GM12878 (cell line): ENCODE measurements at regions of chr5 and their contacts with region 1.

Region 1: GRCh38 chr5:37738057-37738691 is 101.7 kb downstream of the GDNF start:
- DNase-seq: peak; percentile 62
- ATAC-seq: peak; percentile 89
- H3K4me3 ChIP-seq: no peak overlapping the region
- H3K27ac ChIP-seq: no peak overlapping the region
- H3K4me1 ChIP-seq: peaks cover 6% of the 10 kb centered on the region
- H3K27me3 ChIP-seq: no peaks in the 10 kb centered on the region
- CTCF ChIP-seq: no peak
- EP300 ChIP-seq: peak; percentile 43 to 73; a peak in 1 of 4 replicates
- POLR2A ChIP-seq: no peak
- RAD21 ChIP-seq: no peak

Region 2: DNA sequence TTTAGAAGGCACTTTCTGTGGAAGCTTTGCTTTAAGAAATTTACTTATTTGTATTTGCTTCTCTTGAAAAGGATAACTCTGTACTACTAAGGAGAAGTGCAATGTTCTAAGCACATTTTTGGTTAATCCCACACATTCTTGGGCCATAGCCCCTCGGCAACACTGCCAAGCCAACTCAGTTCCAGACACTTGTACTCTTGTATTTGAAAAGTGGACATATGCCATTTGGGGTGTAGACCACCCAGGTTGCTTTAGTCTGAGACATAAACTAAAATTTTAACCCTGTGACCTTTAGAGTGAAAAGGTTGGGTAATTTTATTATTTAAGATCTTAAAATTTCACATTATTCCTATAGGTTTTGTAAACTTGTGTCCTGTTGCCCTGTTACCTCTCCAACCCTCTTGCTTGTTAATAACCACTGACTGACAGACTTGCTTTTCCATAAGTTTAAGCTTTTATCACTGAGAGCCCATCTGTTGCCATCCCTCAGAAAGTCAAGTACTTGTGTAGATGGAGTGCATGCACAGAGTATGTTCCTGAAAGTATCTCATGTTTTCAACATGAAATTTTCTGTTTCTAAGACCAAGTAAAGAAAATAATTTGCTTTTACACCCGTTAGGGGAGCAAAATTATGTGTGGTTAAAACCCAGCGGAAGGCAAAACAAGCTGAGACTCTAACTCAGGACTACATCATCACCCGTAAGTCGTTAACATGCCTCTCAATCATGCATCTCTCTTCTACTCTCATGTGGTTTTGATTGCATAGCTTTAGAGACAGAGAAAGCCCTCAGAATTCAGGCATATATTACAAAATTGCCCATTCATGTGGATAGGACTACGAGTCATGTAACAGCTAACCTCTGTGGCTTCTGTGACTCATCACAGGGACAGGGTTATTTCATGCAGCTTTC is 15.7 kb before region 1 on chr5:
- CTCF ChIA-PET with region 1: interaction called, 26 read pairs
- POLR2A ChIA-PET with region 1: no interaction called
- RAD21 ChIA-PET with region 1: interaction called, 4 read pairs
- SMC1A ChIA-PET with region 1: interaction called, 18 read pairs
- in situ Hi-C with region 1: no loop called
- intact Hi-C with region 1: no loop called
- DNase-seq: peak; percentile 59
- ATAC-seq: peak; percentile 93
- H3K4me3 ChIP-seq: no peak overlapping the region
- H3K27ac ChIP-seq: no peak overlapping the region
- H3K4me1 ChIP-seq: peaks cover 10% of the 10 kb centered on the region
- H3K27me3 ChIP-seq: no peaks in the 10 kb centered on the region
- CTCF ChIP-seq: no peak
- EP300 ChIP-seq: peak in 1 of 2 experiments; percentile 46; a peak in 1 of 4 replicates
- POLR2A ChIP-seq: no peak
- RAD21 ChIP-seq: no peak

Region 3: DNA sequence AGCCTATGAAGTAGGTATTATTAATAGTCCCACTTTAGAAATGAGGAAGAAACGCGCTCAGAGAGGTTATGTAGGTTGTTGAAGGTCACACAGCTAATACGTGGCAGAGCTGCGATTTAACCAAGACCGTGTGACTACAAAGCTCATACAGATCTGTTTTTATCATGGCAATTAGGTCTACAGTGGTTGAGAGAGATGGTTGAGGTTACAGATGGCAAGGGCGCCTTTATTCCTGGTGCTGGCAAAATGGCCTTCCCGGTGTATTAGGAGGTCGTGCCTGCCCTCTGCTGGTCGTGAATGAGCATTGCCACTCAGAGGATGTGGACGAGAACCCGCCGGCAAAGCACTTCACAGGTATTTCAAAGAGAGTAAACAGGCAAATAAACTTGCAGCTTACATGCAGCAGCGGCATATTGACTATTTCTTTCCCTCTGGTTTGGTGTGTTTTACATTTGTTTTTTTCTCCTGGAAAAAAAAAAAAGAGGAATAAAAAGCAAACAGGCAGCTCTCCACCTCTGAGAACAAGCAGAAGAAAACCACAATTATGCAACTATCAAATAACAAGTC is 454.9 kb after region 1 on chr5:
- CTCF ChIA-PET with region 1: no interaction called
- POLR2A ChIA-PET with region 1: no interaction called
- RAD21 ChIA-PET with region 1: no interaction called
- SMC1A ChIA-PET with region 1: no interaction called
- in situ Hi-C with region 1: no loop called
- intact Hi-C with region 1: no loop called
- DNase-seq: no peak
- ATAC-seq: peak; percentile 86
- H3K4me3 ChIP-seq: no peak overlapping the region
- H3K27ac ChIP-seq: no peak overlapping the region
- H3K4me1 ChIP-seq: no peaks in the 10 kb centered on the region
- H3K27me3 ChIP-seq: no peaks in the 10 kb centered on the region; a peak in 2 of 4 replicates
- CTCF ChIP-seq: peak; percentile 86 to 91 (median 87)
- EP300 ChIP-seq: no peak
- POLR2A ChIP-seq: no peak
- RAD21 ChIP-seq: peak; percentile 90